Panc1 (cell line): ENCODE measurements at regions of chr7 and their contacts with region 1.

Region 1: DNA sequence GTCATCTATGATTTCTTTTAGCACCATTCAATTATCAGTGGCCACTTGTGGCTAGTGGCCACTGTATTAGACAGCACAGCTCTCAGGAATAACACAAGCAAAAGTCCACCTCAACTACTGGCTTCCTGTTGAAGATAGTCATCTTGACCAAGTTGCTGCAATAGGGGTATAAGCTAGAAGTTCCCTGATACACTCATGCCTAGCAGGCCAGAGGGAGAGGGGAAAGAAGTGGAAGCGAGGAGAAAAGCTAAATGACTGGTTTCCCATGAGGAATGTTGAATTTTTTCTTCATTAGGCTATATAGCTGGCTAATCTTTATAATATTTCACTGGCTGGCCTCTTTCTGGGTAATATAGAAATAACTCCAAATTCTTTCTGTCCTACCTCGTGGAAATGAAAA is 327.5 kb upstream of the MEOX2 start:
- DNase-seq: no peak
- ATAC-seq: no peak
- H3K4me3 ChIP-seq: no peak overlapping the region
- H3K27ac ChIP-seq: no peak overlapping the region
- H3K4me1 ChIP-seq: no peaks in the 10 kb centered on the region
- H3K27me3 ChIP-seq: no peaks in the 10 kb centered on the region
- CTCF ChIP-seq: no peak

Region 2: GRCh38 chr7:16028103-16028502 is 14.1 kb after region 1 on chr7:
- CTCF ChIA-PET with region 1: no interaction called
- POLR2A ChIA-PET with region 1: no interaction called
- in situ Hi-C with region 1: no loop called
- intact Hi-C with region 1: no loop called
- DNase-seq: no peak
- ATAC-seq: no peak
- H3K4me3 ChIP-seq: no peak overlapping the region
- H3K27ac ChIP-seq: no peak overlapping the region
- H3K4me1 ChIP-seq: no peaks in the 10 kb centered on the region
- H3K27me3 ChIP-seq: no peaks in the 10 kb centered on the region
- CTCF ChIP-seq: no peak

Region 3: GRCh38 chr7:16046041-16046440 is 32.0 kb after region 1 on chr7:
- CTCF ChIA-PET with region 1: no interaction called
- POLR2A ChIA-PET with region 1: no interaction called
- in situ Hi-C with region 1: loop called (anchors 5 kb)
- intact Hi-C with region 1: no loop called
- DNase-seq: no peak
- ATAC-seq: no peak
- H3K4me3 ChIP-seq: no peak overlapping the region
- H3K27ac ChIP-seq: no peak overlapping the region
- H3K4me1 ChIP-seq: no peaks in the 10 kb centered on the region
- H3K27me3 ChIP-seq: no peaks in the 10 kb centered on the region
- CTCF ChIP-seq: no peak

Region 4: GRCh38 chr7:16223963-16224707 is 210.1 kb after region 1 on chr7:
- CTCF ChIA-PET with region 1: no interaction called
- POLR2A ChIA-PET with region 1: no interaction called
- in situ Hi-C with region 1: no loop called
- intact Hi-C with region 1: no loop called
- DNase-seq: no peak
- ATAC-seq: no peak
- H3K4me3 ChIP-seq: no peak overlapping the region
- H3K27ac ChIP-seq: no peak overlapping the region
- H3K4me1 ChIP-seq: no peaks in the 10 kb centered on the region
- H3K27me3 ChIP-seq: no peaks in the 10 kb centered on the region
- CTCF ChIP-seq: no peak